ENCODE measurements at regions of chr7 and their contacts with region 1.

Region 1: DNA sequence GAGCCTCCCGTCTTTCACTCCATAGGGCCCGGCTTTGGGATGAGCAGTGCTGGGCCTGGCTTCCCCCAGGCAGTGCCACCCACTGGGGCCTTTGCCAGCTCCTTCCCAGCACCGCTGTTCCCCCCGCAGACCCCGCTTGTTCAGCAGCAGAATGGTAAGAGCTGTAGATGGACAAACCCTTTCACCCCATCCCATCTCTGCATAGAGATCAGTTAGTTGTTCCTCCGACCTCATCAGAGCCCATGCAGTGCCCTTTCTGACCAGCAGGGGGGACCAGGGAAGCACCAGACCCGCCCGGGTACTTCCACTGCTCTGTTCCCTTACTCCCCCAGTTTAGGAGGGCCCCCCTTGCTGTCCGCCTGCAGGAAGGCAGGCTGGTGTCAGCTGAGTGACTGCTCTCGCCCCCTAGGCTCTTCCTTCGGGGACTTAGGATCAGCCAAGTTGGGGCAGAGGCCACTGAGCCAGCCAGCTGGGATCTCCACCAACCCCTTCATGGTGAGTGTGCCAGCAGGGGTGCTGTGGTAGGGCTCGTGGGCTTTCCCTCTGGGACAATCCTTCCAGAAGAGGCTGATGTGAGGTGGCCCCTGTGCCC is 9.8 kb downstream of the SAP25 start:
- DNase-seq: peak; percentile 69
- H3K4me3 Mint-ChIP-seq: no peak overlapping the region
- H3K27ac Mint-ChIP-seq: peak overlapping the region; percentile 24
- H3K4me1 Mint-ChIP-seq: peaks cover 33% of the 10 kb centered on the region
- H3K27me3 Mint-ChIP-seq: no peaks in the 10 kb centered on the region

Region 2: GRCh38 chr7:100396421-100396982 is 167.4 kb before region 1 on chr7:
- intact Hi-C with region 1: no loop called
- DNase-seq: peak; percentile 53
- H3K4me3 Mint-ChIP-seq: peak overlapping the region; percentile 51
- H3K27ac Mint-ChIP-seq: peak overlapping the region; percentile 84
- H3K4me1 Mint-ChIP-seq: peaks cover 22% of the 10 kb centered on the region
- H3K27me3 Mint-ChIP-seq: peaks cover 51% of the 10 kb centered on the region

Region 3: GRCh38 chr7:100469227-100470044 is 94.5 kb before region 1 on chr7:
- intact Hi-C with region 1: loop called (anchors 1 kb)
- DNase-seq: peak; percentile 64
- H3K4me3 Mint-ChIP-seq: no peak overlapping the region
- H3K27ac Mint-ChIP-seq: no peak overlapping the region
- H3K4me1 Mint-ChIP-seq: peaks cover 13% of the 10 kb centered on the region
- H3K27me3 Mint-ChIP-seq: no peaks in the 10 kb centered on the region

Region 4: GRCh38 chr7:100478966-100479665 is 84.8 kb before region 1 on chr7 and contains the start of gene TSC22D4:
- intact Hi-C with region 1: loop called (anchors 1 kb)
- DNase-seq: peak; percentile 85
- H3K4me3 Mint-ChIP-seq: peak within 1 kb of the TSS; percentile 99
- H3K27ac Mint-ChIP-seq: peak within 1 kb of the TSS; percentile 93
- H3K4me1 Mint-ChIP-seq: peaks cover 35% of the 10 kb centered on the region
- H3K27me3 Mint-ChIP-seq: peaks cover 6% of the 10 kb centered on the region
- total RNA-seq, gene TSC22D4: 126 and 134 TPM in 2 replicates

Region 5: DNA sequence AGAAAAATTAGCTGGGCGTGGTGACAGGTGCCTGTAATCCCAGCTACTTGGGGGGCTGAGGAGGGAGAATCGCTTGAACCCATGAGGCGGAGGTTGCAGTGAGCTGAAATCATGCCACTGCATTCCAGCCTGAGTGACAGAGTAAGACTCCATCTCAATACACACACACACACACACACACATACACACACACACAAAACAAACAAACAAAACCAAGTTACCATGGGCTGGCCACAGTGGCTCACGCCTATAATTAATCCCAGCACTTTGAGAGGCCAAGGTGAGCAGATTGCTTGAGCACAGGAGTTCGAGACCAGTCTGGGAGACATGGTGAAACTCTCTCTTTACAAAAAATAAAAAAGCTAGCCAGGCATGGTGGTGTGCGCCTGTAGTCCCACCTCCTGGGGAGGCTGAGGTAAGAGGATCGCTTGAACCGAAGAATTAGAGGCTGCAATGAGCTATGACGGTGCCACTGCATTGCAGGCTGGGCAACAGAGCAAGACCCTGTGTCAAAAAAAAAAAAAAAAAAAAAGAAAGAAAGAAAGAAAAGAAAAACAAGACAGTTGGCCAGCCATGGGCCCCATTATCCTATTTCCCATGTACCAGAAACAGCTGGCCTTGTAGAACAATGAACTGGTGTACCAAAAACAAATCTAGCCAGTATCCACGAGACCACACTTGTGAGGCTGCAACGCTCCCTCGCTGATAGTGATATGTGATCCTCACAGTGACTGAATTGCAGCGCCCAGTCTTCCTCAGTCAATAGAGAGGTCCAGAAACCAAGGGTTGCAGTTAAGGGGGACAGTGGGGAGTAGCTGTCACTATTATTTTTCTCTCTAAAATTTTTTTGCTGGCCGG is 31.5 kb before region 1 on chr7:
- intact Hi-C with region 1: loop called (anchors 5 kb)
- DNase-seq: no peak
- H3K4me3 Mint-ChIP-seq: no peak overlapping the region
- H3K27ac Mint-ChIP-seq: no peak overlapping the region
- H3K4me1 Mint-ChIP-seq: peaks cover under 1% of the 10 kb centered on the region
- H3K27me3 Mint-ChIP-seq: peaks cover 2% of the 10 kb centered on the region

Region 6: GRCh38 chr7:100538654-100539435 is 25.1 kb before region 1 on chr7 and contains the start of gene AGFG2:
- intact Hi-C with region 1: loop called (anchors 1 kb)
- DNase-seq: peak; percentile 100
- H3K4me3 Mint-ChIP-seq: peak within 1 kb of the TSS; percentile 98
- H3K27ac Mint-ChIP-seq: peak within 1 kb of the TSS; percentile 85
- H3K4me1 Mint-ChIP-seq: peaks cover 44% of the 10 kb centered on the region
- H3K27me3 Mint-ChIP-seq: no peaks in the 10 kb centered on the region
- total RNA-seq, gene AGFG2: 113 and 124 TPM in 2 replicates

Region 7: DNA sequence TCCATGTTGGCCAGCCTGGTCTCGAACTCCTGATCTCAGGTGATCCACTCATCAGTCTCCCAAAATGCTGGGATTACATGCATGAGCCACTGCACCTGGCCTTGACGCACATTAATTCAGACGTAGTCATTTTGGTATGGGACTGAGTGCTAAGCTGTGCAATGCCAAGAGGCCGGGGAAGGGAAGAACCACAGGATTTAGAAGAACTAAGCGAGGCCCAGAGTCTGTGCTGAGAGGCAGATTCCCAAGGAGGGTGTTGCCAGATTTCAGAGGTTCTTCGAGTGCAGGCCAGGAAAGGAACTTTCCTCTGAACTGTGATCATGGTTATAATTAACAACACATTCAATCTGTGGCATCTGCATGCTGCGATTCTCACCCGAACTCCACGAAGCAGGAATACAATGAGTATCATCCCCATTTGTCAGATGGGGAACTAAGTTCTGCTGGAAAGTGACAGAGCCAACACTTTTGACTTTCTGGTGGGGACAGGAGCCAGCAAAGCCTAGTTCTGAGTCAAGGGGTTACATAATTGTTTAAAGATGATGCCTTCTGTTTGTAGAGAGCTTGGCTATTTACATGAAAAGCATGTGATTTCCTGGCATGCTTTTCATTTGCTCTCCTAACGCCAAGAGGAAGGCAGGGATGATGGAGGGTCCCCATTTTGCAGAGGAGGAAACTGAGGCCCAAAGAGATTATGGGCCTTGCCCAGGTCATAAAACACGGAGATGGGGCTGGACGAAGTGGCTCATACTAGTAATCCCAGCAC is 163.3 kb after region 1 on chr7:
- intact Hi-C with region 1: loop called (anchors 1 kb)
- DNase-seq: no peak
- H3K4me3 Mint-ChIP-seq: no peak overlapping the region
- H3K27ac Mint-ChIP-seq: no peak overlapping the region
- H3K4me1 Mint-ChIP-seq: peaks cover 6% of the 10 kb centered on the region
- H3K27me3 Mint-ChIP-seq: peaks cover 11% of the 10 kb centered on the region

Measured in activated T-helper 1 cell treated with anti-CD3 and anti-CD28 coated beads, Interleukin-12 subunit alpha, Interleukin-12 subunit beta, Interleukin-2, Interleukin-4 antibody, amounts not matched to agents 30 ng/mL and 10 ng/mL and 1 ng/mL, durations not matched to agents 14 hours and 24 hours and 36 hours (primary cell).